ENCODE measurements at regions of chr22 and their contacts with region 1.

Region 1: GRCh38 chr22:39170825-39171622 is 18.5 kb upstream of the CBX7 start:
- DNase-seq: peak; percentile 87 to 91
- ATAC-seq: peak; percentile 44 to 77 (median 60)
- H3K4me3 ChIP-seq: no peak overlapping the region
- H3K4me3 Mint-ChIP-seq: peak overlapping the region; percentile 70
- H3K27ac ChIP-seq: peak overlapping the region; percentile 56
- H3K27ac Mint-ChIP-seq: peak overlapping the region; percentile 71 to 98
- H3K4me1 ChIP-seq: peaks cover 56% of the 10 kb centered on the region
- H3K4me1 Mint-ChIP-seq: peaks cover 34 to 55% of the 10 kb centered on the region in 2 donors
- H3K27me3 ChIP-seq: no peaks in the 10 kb centered on the region
- H3K27me3 Mint-ChIP-seq: peaks cover 0 to 6% of the 10 kb centered on the region in 2 donors
- CTCF ChIP-seq: peak; percentile 93

Region 2: GRCh38 chr22:39152511-39153219 is 18.4 kb before region 1 on chr22 and contains the start of gene CBX7:
- intact Hi-C with region 1: loop called (anchors 2 kb)
- DNase-seq: peak; percentile 89 to 97
- ATAC-seq: peak; percentile 88 to 95 (median 88)
- H3K4me3 ChIP-seq: peak within 1 kb of the TSS; percentile 82
- H3K4me3 Mint-ChIP-seq: peak within 1 kb of the TSS; percentile 87
- H3K27ac ChIP-seq: peak within 1 kb of the TSS; percentile 96
- H3K27ac Mint-ChIP-seq: peak within 1 kb of the TSS; percentile 84 to 98
- H3K4me1 ChIP-seq: peaks cover 52% of the 10 kb centered on the region
- H3K4me1 Mint-ChIP-seq: peaks cover 15 to 32% of the 10 kb centered on the region in 2 donors
- H3K27me3 ChIP-seq: peaks cover 3% of the 10 kb centered on the region
- H3K27me3 Mint-ChIP-seq: no peaks in the 10 kb centered on the region
- CTCF ChIP-seq: no peak
- total RNA-seq, gene CBX7: 49.6 to 52.9 (median 50.0) TPM

Region 3: GRCh38 chr22:39236321-39237317 is 65.6 kb after region 1 on chr22:
- intact Hi-C with region 1: loop called (anchors 1 kb)
- DNase-seq: peak; percentile 47 to 84
- ATAC-seq: peak; percentile 56 to 78 (median 57)
- H3K4me3 ChIP-seq: no peak overlapping the region
- H3K4me3 Mint-ChIP-seq: peak overlapping the region; percentile 87
- H3K27ac ChIP-seq: no peak overlapping the region
- H3K27ac Mint-ChIP-seq: peak overlapping the region; percentile 45 to 69
- H3K4me1 ChIP-seq: peaks cover 58% of the 10 kb centered on the region
- H3K4me1 Mint-ChIP-seq: peaks cover 40 to 65% of the 10 kb centered on the region in 2 donors
- H3K27me3 ChIP-seq: peaks cover 52% of the 10 kb centered on the region
- H3K27me3 Mint-ChIP-seq: peaks cover 55 to 72% of the 10 kb centered on the region in 2 donors
- CTCF ChIP-seq: no peak

Region 4: GRCh38 chr22:39319270-39320022 is 148.4 kb after region 1 on chr22 and contains the start of gene RPL3:
- intact Hi-C with region 1: loop called (anchors 1 kb)
- DNase-seq: peak; percentile 98 to 99
- ATAC-seq: peak; percentile 77 to 92 (median 81)
- H3K4me3 ChIP-seq: peak within 1 kb of the TSS; percentile 72
- H3K4me3 Mint-ChIP-seq: peak within 1 kb of the TSS; percentile 99
- H3K27ac ChIP-seq: peak within 1 kb of the TSS; percentile 97
- H3K27ac Mint-ChIP-seq: peak within 1 kb of the TSS; percentile 99 to 100
- H3K4me1 ChIP-seq: peaks cover 54% of the 10 kb centered on the region
- H3K4me1 Mint-ChIP-seq: peaks cover 34 to 63% of the 10 kb centered on the region in 2 donors
- H3K27me3 ChIP-seq: no peaks in the 10 kb centered on the region
- H3K27me3 Mint-ChIP-seq: no peaks in the 10 kb centered on the region
- CTCF ChIP-seq: no peak
- total RNA-seq, gene RPL3: 1,534 to 1,757 (median 1,614) TPM

Measured in natural killer cell (primary cell).